Right lobe of liver (tissue), 6 donors: ENCODE measurements at regions of chr10 and their contacts with region 1.

Region 1: GRCh38 chr10:27658788-27659187 is 86.8 kb downstream of the MKX start:
- DNase-seq: no peak
- ATAC-seq: no peak
- H3K4me3 ChIP-seq: no peak overlapping the region
- H3K27ac ChIP-seq: no peak overlapping the region
- H3K4me1 ChIP-seq: no peaks in the 10 kb centered on the region
- H3K27me3 ChIP-seq: peaks cover 0 to 4% of the 10 kb centered on the region in 2 donors
- CTCF ChIP-seq: no peak
- POLR2A ChIP-seq: no peak

Region 2: DNA sequence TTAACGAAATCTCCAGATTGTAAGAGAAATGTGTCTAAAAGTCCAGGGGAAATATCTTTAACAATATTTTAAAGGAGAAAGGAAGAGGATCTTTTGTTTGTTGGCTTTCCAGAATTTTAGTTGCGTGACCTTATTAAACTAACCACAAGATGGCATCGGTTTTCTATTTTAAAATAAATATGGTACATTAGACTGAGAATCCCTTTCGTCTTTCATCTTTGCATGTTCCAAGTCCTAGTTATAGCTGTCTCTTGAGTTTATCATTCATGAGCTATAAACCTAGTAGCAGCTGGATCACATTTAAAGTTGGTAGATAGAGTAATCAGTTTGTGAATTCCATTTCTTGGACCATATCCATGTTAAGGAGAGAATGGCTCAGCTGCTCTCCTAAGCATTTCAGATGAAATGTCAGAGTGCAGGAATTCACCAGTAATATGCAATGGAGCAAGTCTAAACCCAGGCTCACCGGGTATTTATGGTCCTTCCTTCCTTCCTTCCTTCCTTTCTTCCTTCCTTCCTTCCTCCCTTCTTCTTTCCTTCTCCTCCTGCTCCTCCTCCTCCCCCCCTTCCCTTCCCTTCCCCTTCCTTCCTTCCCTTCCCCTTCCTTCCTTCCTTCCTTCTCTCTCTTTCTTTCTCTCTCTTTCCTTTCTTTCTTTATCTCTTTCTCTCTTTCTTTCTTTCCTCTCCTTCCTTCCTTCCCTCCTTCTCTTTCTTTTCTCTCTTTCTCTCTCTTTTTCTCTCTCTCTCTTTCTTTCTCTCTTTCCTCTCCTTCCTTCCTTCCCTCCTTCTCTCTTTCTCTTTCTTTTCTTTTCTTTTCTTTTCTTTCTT is 212.5 kb before region 1 on chr10:
- intact Hi-C with region 1: loop called in 1 of 2 experiments (anchors 10 kb)
- DNase-seq: no peak
- ATAC-seq: peak; percentile 47 to 71 (median 62)
- H3K4me3 ChIP-seq: no peak overlapping the region
- H3K27ac ChIP-seq: no peak overlapping the region
- H3K4me1 ChIP-seq: no peaks in the 10 kb centered on the region
- H3K27me3 ChIP-seq: no peaks in the 10 kb centered on the region
- CTCF ChIP-seq: peak; percentile 44 to 49 (median 47)
- POLR2A ChIP-seq: no peak

Region 3: GRCh38 chr10:27558612-27559020 is 100.2 kb before region 1 on chr10:
- intact Hi-C with region 1: loop called in 1 of 2 experiments (anchors 10 kb)
- DNase-seq: peak in 1 of 3 donors; percentile 62
- ATAC-seq: peak; percentile 89 to 95 (median 92)
- H3K4me3 ChIP-seq: no peak overlapping the region
- H3K27ac ChIP-seq: no peak overlapping the region
- H3K4me1 ChIP-seq: no peaks in the 10 kb centered on the region
- H3K27me3 ChIP-seq: no peaks in the 10 kb centered on the region
- CTCF ChIP-seq: peak; percentile 64 to 75 (median 70)
- POLR2A ChIP-seq: no peak

Region 4: GRCh38 chr10:27745732-27746396 is 87.1 kb after region 1 on chr10 and contains the start of gene MKX:
- intact Hi-C with region 1: no loop called
- DNase-seq: peak in 2 of 3 donors; percentile 39 to 60
- ATAC-seq: no peak
- H3K4me3 ChIP-seq: peak within 1 kb of the TSS; percentile 7 to 42 (median 34)
- H3K27ac ChIP-seq: no peak within 1 kb of the TSS
- H3K4me1 ChIP-seq: peaks cover 0 to 32% (median 6%) of the 10 kb centered on the region in 4 donors
- H3K27me3 ChIP-seq: peaks cover 13 to 20% of the 10 kb centered on the region in 2 donors
- CTCF ChIP-seq: no peak
- POLR2A ChIP-seq: no peak
- total RNA-seq, gene MKX: 0.29 to 2.1 (median 0.66) TPM